ENCODE measurements at regions of chr6 and their contacts with region 1.

Region 1: GRCh38 chr6:150004783-150005717 is 20.3 kb downstream of the RAET1L start:
- DNase-seq: peak; percentile 93
- H3K4me3 ChIP-seq: peak overlapping the region; percentile 70
- H3K27ac ChIP-seq: peak overlapping the region; percentile 74
- H3K4me1 ChIP-seq: peaks cover 24% of the 10 kb centered on the region
- CTCF ChIP-seq: peak; percentile 33; the same call in 1 of the 2 replicates

Region 2: GRCh38 chr6:149852180-149852579 is 152.9 kb before region 1 on chr6:
- CTCF ChIA-PET with region 1: no interaction called
- POLR2A ChIA-PET with region 1: no interaction called
- intact Hi-C with region 1: no loop called
- DNase-seq: peak; percentile 76
- H3K4me3 ChIP-seq: peak overlapping the region; percentile 59
- H3K27ac ChIP-seq: peak overlapping the region; percentile 22
- H3K4me1 ChIP-seq: peaks cover 19% of the 10 kb centered on the region
- CTCF ChIP-seq: no peak

Region 3: DNA sequence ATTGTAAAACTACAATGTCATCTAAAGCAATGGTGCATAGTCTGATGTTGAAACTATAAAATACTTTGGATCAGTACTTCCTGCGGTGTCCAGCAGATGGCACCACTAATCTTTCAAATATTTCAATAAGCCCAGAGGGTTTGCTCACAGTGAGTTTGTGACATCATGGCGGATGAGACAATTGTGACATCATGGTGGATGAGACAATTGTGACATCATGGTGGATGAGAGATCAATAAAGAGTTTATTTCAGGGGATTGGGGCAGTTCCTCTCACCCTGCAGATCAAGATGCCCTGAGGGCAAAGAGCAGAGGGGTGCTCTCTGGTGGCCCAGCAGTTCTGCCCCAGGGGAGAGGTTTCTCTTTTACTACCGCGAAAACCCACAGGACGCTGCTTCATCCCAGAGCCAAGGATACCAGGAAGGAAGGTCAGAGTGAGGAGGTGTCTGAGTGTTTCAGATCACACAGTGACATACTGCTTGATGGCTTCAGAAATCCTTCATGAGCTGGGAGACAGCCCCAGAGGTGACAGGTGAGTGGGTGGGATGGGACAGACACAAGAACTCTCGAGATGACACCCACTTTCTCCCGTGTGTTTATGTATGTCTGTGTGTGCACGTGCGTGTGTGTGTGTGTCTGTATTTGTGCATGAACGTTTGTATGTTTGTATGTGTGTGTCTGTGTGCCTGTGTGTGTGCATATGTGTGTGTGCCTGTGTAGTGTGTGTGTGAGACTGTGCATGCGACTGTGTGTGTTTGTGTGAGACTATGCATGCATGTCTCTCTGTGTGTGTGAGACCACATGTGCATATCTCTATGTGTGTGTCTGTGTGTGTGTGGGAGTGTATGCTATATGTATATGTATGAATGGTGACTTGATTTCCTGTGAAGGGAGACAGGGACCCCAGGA is 70.5 kb before region 1 on chr6:
- CTCF ChIA-PET with region 1: no interaction called
- POLR2A ChIA-PET with region 1: interaction called, 8 read pairs
- intact Hi-C with region 1: loop called (anchors 2 kb)
- DNase-seq: peak; percentile 78
- H3K4me3 ChIP-seq: no peak overlapping the region
- H3K27ac ChIP-seq: no peak overlapping the region
- H3K4me1 ChIP-seq: peaks cover 5% of the 10 kb centered on the region
- CTCF ChIP-seq: peak; percentile 94

Region 4: GRCh38 chr6:150029749-150030148 is 24.7 kb after region 1 on chr6:
- CTCF ChIA-PET with region 1: no interaction called
- POLR2A ChIA-PET with region 1: no interaction called
- intact Hi-C with region 1: loop called (anchors 2 kb)
- DNase-seq: peak; percentile 52
- H3K4me3 ChIP-seq: no peak overlapping the region
- H3K27ac ChIP-seq: no peak overlapping the region
- H3K4me1 ChIP-seq: peaks cover 12% of the 10 kb centered on the region
- CTCF ChIP-seq: no peak

Region 5: GRCh38 chr6:150068720-150069648 is 63.9 kb after region 1 on chr6 and contains the start of gene ULBP3:
- CTCF ChIA-PET with region 1: no interaction called
- POLR2A ChIA-PET with region 1: interaction called, 3 read pairs
- intact Hi-C with region 1: loop called (anchors 1 kb)
- DNase-seq: peak; percentile 75
- H3K4me3 ChIP-seq: peak within 1 kb of the TSS; percentile 69
- H3K27ac ChIP-seq: no peak within 1 kb of the TSS
- H3K4me1 ChIP-seq: no peaks in the 10 kb centered on the region
- CTCF ChIP-seq: peak; percentile 67
- total RNA-seq, gene ULBP3: 3.5 and 4.5 TPM in 2 replicates

Region 6: DNA sequence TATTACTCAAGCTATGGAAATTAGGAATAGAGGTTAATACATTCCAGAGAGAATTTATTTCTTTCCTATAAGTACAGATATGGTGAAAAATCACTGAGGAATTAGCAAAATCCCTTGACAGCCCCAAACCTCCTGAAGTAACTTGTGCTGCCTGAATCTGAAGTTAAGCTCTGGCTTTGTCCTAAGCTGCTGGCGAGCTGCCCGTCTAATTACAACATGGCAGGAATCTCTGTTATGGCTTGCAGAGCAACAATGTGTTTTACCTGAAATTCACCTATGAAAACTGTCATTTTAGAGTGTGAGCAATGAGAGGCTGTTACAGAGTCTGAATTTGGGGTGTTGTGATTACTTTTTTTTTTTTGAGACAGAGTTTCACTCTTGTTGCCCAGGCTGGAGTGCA is 341.3 kb after region 1 on chr6:
- CTCF ChIA-PET with region 1: no interaction called
- POLR2A ChIA-PET with region 1: no interaction called
- intact Hi-C with region 1: loop called (anchors 5 kb)
- DNase-seq: no peak
- H3K4me3 ChIP-seq: no peak overlapping the region
- H3K27ac ChIP-seq: no peak overlapping the region
- H3K4me1 ChIP-seq: peaks cover 36% of the 10 kb centered on the region
- CTCF ChIP-seq: no peak